AG04449 (cell line): ENCODE measurements at regions of chr15 and their contacts with region 1.

Region 1: GRCh38 chr15:73273181-73274002 is 95.4 kb downstream of the HCN4 start:
- DNase-seq: no peak
- H3K4me3 ChIP-seq: no peak overlapping the region
- CTCF ChIP-seq: peak; percentile 73

Region 2: DNA sequence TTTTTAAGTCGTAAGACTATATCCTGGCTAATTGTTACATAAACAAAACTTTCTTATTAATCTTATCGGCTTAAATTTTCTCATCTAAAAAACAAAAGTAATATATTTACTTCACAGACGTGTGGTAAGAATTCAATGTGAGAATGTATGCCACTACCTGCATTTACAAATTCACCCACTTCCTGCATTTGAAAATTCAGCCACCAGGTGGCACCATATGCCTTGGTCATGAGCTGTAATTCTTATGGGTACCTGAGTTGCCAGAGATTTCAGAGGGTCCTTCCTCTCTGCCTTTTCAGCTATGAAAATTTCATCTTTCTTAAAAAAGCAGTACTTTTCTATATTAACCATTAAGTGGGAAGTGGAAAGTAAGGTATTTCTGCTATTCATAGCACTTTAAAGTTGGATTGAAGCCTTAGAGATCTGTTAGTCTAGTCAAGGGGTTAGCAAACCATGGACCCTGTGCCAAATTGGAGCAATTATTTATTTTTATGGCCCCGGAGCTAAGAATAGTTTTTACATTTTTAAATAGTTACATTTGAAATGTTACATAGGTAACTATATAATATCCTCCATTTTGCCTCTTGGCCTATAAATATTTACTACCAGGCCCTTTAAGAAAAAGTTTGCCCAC is 32.4 kb before region 1 on chr15:
- CTCF ChIA-PET with region 1: interaction called, 193 read pairs
- POLR2A ChIA-PET with region 1: no interaction called
- DNase-seq: no peak
- H3K4me3 ChIP-seq: no peak overlapping the region
- CTCF ChIP-seq: peak; percentile 78

Region 3: GRCh38 chr15:73246439-73246838 is 27.0 kb before region 1 on chr15:
- CTCF ChIA-PET with region 1: interaction called, 193 read pairs
- POLR2A ChIA-PET with region 1: no interaction called
- DNase-seq: no peak
- H3K4me3 ChIP-seq: no peak overlapping the region
- CTCF ChIP-seq: no peak

Region 4: GRCh38 chr15:73258271-73259108 is 14.9 kb before region 1 on chr15:
- CTCF ChIA-PET with region 1: interaction called, 102 read pairs
- POLR2A ChIA-PET with region 1: no interaction called
- DNase-seq: no peak
- H3K4me3 ChIP-seq: no peak overlapping the region
- CTCF ChIP-seq: no peak

Region 5: GRCh38 chr15:73284090-73284716 is 10.8 kb after region 1 on chr15:
- CTCF ChIA-PET with region 1: interaction called, 91 read pairs
- POLR2A ChIA-PET with region 1: no interaction called
- DNase-seq: no peak
- H3K4me3 ChIP-seq: no peak overlapping the region
- CTCF ChIP-seq: peak; percentile 27

Region 6: DNA sequence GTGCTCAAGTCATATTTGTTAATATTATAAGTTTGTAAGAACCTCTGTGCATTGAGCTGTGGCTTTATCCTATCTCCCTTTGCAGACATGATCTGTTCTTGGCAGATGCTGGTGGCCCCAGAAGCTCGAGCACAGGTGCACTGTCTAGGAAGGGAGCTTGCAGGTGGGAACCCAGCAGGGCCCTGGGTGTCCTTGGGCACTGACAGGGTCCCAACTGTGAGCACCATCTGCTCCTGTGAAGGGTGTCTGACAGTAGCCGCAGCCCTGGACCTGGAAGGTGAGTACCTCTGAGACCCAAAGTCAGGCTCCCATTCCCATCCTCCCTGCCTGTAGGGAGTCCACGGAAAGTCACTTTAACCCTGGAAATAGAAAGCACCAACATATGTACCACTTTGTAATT is 167.2 kb after region 1 on chr15:
- CTCF ChIA-PET with region 1: no interaction called
- POLR2A ChIA-PET with region 1: no interaction called
- DNase-seq: no peak
- H3K4me3 ChIP-seq: no peak overlapping the region
- CTCF ChIP-seq: no peak

Region 7: GRCh38 chr15:73584699-73585420 is 311.5 kb after region 1 on chr15:
- CTCF ChIA-PET with region 1: no interaction called
- POLR2A ChIA-PET with region 1: no interaction called
- DNase-seq: no peak
- H3K4me3 ChIP-seq: no peak overlapping the region
- CTCF ChIP-seq: no peak